ENCODE measurements at regions of chr10 and their contacts with region 1.

Region 1: GRCh38 chr10:104349623-104350126 is 4.0 kb upstream of the CFAP58 start:
- ATAC-seq: no peak
- H3K4me3 ChIP-seq: no peak overlapping the region
- H3K27ac ChIP-seq: no peak overlapping the region
- H3K4me1 ChIP-seq: peaks cover 6 to 9% of the 10 kb centered on the region in 2 donors

Region 2: DNA sequence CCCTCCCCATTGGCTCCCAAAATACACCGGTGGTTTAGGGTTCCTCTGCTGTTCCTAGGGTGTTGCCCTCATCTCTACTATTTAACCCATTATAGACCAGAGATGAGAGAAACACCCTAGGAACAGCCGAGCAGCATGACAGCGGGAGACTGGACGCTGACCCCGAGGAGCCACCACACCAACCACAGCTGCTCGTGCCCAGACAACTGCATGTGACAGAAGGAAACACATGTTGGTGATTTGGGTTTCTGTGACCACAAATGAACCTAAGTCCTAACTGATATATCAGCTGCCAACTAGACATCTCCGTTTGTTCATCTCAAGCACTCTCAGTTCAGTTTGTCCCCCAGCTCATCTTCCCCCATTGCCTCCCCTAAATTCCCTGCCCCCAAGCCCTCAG is 130.9 kb before region 1 on chr10:
- in situ Hi-C with region 1: no loop called
- ATAC-seq: no peak
- H3K4me3 ChIP-seq: no peak overlapping the region
- H3K27ac ChIP-seq: no peak overlapping the region
- H3K4me1 ChIP-seq: no peaks in the 10 kb centered on the region

Region 3: DNA sequence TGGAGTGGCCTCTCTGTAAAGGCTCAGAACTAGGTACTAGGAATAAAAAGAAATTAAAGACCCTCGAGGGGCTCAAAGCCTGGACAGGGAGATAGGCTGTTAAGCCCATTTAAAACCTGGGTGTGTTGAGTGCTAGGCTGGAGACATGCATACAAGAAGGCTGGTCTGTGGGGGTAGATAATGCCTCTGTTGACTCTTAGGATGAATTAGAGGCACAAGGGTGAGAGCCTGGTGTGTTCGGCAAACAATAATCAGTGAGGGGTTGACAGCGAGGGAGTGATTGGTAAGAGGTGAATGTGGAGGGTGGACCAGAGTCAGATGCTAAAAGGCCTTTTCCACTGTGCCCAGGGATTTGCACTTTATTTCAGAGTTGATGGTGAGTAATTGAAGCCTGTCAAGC is 68.0 kb before region 1 on chr10:
- in situ Hi-C with region 1: loop called in 1 of 9 experiments (anchors 5 kb)
- ATAC-seq: no peak
- H3K4me3 ChIP-seq: no peak overlapping the region
- H3K27ac ChIP-seq: no peak overlapping the region
- H3K4me1 ChIP-seq: no peaks in the 10 kb centered on the region

Region 4: DNA sequence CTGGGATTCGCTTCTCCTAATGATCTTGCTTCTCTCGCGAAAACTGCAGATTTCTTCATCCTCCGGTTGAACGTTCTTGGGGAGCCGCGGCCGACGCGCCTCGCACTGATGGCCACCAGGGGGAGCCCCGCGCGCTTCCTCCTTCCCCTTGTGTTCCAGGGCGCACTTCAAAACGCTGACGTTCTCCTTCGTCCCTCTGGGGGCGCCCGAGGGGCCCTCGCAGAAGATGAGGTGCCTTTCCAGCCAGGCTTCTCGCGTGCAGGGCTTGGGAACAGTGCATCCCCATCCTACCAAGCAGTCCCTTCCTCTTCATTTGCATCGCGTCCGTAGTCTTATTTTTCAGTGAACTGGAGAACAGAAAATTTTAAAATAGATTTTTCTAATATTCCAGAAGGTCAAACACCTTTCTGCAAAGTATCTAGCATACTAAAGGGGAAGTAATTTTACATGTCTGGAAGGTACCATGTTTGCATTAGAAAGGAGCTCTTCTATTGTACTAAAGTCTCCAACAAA is 58.2 kb before region 1 on chr10:
- in situ Hi-C with region 1: loop called in 1 of 9 experiments (anchors 10 kb)
- ATAC-seq: peak; percentile 93 to 100 (median 100)
- H3K4me3 ChIP-seq: no peak overlapping the region
- H3K27ac ChIP-seq: no peak overlapping the region
- H3K4me1 ChIP-seq: no peaks in the 10 kb centered on the region

Region 5: GRCh38 chr10:104472493-104472892 is 122.8 kb after region 1 on chr10:
- in situ Hi-C with region 1: no loop called
- ATAC-seq: peak in 2 of 8 experiments; percentile 66 to 95
- H3K4me3 ChIP-seq: no peak overlapping the region
- H3K27ac ChIP-seq: no peak overlapping the region
- H3K4me1 ChIP-seq: no peaks in the 10 kb centered on the region

Region 6: GRCh38 chr10:105056413-105056812 is 706.7 kb after region 1 on chr10:
- in situ Hi-C with region 1: no loop called
- ATAC-seq: no peak
- H3K4me3 ChIP-seq: no peak overlapping the region
- H3K27ac ChIP-seq: no peak overlapping the region
- H3K4me1 ChIP-seq: no peaks in the 10 kb centered on the region

Measured in motor neuron (in vitro differentiated cells).